GM12878 (cell line): ENCODE measurements at regions of chr18 and their contacts with region 1.

Region 1: DNA sequence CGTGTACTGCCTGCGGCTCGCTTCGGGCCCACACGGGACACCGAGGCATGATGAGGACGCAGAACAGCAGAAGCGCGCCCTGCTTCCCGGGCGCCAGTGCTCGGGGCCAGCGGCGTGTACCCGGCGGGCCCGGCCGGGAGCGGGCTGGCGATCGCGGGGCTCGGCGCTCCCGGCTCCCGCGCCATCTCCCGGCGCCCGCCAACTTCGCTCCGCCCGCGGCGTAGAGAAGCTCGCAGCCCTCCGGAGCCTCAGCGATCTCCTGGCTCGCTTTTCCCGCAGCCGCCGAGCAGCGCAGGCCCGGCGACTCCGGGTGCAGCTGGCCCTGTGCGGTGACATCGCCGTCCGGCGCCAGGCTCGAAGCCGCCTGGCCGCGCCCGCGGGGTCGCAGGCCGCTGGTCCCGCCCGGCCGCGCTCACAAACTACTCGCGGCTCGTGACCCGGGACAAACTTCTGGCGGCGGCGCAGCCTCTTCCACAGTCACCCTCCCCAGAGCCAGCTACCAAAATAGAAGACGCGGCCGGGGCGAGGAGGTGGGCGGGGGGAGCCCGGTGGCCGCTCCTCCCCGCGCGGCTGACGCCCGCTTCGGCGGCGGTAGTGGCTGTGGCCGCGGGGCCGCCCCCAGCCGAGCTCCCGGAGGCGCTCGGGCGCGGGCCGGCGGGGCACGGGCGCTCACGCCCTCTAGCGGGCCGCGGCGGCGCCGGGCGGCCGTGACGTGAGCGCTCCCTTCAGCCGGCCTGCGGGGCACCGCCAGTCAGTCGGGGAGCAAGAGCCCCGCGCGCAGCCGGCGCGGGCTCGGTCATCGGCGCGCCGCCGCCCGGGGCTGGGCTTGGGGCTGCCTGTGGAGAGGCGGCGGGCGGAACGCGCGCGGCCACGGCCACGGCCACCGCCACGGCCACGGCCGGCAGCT is at the start of gene PTPRM:
- DNase-seq: no peak
- ATAC-seq: peak; percentile 95
- H3K4me3 ChIP-seq: no peak within 1 kb of the TSS
- H3K27ac ChIP-seq: no peak within 1 kb of the TSS
- H3K4me1 ChIP-seq: no peaks in the 10 kb centered on the region
- H3K27me3 ChIP-seq: peaks cover 0 to 12% of the 10 kb centered on the region in 2 experiments; a peak in 3 of 4 replicates
- CTCF ChIP-seq: peak in 2 of 3 experiments; percentile 32 to 47; a peak in 3 of 6 replicates
- EP300 ChIP-seq: no peak
- POLR2A ChIP-seq: no peak
- RAD21 ChIP-seq: no peak
- polyA plus RNA-seq, gene PTPRM: 0.07 to 0.13 TPM

Region 2: DNA sequence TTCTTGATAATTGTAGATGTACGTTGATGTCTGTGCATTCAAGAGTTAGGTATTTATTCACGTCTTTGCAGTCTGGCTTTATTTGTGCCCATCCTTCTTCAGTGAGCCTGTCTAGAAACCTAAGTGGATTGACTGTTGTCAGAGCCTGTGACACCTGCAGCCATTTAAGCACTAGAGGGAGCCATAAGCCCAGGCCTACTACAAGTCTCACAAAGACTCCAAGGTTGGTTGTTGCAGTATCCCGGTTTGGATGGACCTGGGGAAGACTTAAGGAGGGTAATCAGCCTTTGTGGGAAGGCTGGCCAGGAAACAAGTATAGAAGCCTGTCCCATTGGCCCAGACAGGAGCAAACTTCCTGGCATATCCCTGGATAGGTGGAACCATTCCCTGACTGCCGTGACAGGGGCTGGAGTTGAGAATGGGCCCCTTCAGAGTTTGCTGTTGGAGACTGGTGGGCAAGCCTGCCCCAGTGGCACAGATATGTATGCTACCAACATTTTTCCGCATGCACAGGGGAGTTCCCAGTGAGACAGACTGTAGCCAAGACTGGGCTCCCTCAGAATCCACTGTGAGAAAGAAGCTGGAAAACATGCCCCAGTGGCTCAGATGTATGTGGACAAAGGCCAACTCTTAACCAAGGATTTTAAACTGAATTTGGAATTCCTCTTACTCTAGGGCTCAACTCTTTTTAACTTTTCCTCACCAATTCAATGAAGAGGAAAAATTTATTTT is 345.2 kb before region 1 on chr18:
- CTCF ChIA-PET with region 1: no interaction called
- POLR2A ChIA-PET with region 1: no interaction called
- RAD21 ChIA-PET with region 1: no interaction called
- SMC1A ChIA-PET with region 1: no interaction called
- in situ Hi-C with region 1: no loop called
- intact Hi-C with region 1: loop called (anchors 2 kb)
- DNase-seq: peak; percentile 4
- ATAC-seq: peak; percentile 89
- H3K4me3 ChIP-seq: no peak overlapping the region
- H3K27ac ChIP-seq: no peak overlapping the region
- H3K4me1 ChIP-seq: no peaks in the 10 kb centered on the region
- H3K27me3 ChIP-seq: no peaks in the 10 kb centered on the region
- CTCF ChIP-seq: peak; percentile 58 to 80 (median 73)
- EP300 ChIP-seq: no peak
- POLR2A ChIP-seq: no peak
- RAD21 ChIP-seq: peak; percentile 66